ENCODE measurements at regions of chr3 and their contacts with region 1.

Region 1: DNA sequence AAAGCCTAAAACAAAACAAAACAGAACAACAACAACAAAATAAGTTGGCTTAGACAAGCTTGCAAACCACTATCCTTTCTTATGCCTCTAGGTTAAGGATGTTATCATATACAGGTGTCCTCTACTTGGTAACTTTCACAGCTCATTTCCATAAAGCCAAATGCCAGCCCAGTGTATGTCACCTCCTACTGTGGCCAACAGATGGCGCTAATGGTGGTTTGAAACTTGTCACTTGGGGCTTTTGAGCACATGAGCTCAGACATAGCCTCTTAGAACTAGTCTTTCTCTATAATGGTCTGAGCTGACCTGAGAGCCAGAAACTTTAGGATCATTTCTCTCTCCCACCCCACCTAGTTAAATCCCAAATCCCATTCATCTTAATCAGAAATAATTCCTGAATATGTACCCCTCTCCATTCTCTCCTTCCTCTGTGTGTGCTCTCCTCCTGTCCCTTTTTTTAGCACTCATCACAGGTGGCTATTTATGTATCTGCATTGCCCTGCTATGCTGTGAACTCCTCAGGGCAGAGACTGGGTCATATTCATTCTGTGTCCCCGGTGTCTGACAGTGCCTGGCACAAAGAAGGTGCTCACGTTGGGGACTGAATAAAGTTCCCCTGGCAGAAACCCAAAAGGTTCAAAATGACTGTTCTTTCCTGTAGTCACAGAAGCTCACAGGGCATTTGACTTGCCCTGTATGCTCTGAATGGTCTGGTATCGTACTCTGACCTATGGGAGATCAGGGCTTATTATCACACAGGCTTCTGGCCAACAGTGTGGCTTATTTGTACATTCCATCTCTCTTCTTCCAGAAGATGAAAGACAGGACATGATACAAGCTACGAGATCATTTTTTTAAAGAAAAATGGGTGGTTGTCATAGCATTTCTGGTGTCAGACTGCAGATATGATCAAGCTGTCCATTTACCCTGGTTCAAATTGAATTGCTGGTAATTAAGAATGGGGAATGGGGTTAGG is 319.3 kb upstream of the AZI2 start:
- DNase-seq: peak; percentile 11 to 65
- ATAC-seq: peak; percentile 90 to 97
- H3K4me3 ChIP-seq: no peak overlapping the region
- H3K27ac ChIP-seq: no peak overlapping the region
- H3K4me1 ChIP-seq: no peaks in the 10 kb centered on the region
- CTCF ChIP-seq: peak; percentile 70
- EP300 ChIP-seq: no peak
- POLR2A ChIP-seq: no peak
- RAD21 ChIP-seq: peak; percentile 58 to 59

Region 2: DNA sequence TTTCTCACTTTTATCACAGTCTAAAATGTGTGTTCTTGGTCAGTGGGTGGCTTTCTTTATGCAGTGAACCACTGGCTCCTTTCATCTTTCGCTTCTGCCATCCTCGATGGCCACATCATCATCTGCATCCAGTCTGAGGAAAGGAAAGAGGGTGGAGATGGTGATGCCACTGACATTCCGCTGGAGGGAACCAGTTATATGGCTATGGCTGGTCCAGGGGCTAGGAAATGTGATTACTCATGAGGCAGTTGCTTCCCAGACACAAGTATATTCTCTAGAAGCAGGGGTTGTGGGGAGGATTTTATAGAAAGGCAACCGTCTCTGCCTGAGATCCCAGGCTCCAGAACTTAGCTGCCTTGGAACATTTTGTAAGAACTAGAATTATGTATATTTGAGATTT is 72.6 kb before region 1 on chr3:
- CTCF ChIA-PET with region 1: no interaction called
- POLR2A ChIA-PET with region 1: no interaction called
- DNase-seq: no peak
- ATAC-seq: no peak; a peak in 1 of 6 replicates
- H3K4me3 ChIP-seq: no peak overlapping the region
- H3K27ac ChIP-seq: no peak overlapping the region
- H3K4me1 ChIP-seq: no peaks in the 10 kb centered on the region
- CTCF ChIP-seq: no peak
- EP300 ChIP-seq: no peak
- POLR2A ChIP-seq: no peak
- RAD21 ChIP-seq: no peak

Region 3: GRCh38 chr3:28924744-28925360 is 256.9 kb after region 1 on chr3:
- CTCF ChIA-PET with region 1: no interaction called
- POLR2A ChIA-PET with region 1: no interaction called
- DNase-seq: peak in 1 of 2 experiments; percentile 32
- ATAC-seq: no peak
- H3K4me3 ChIP-seq: no peak overlapping the region
- H3K27ac ChIP-seq: no peak overlapping the region
- H3K4me1 ChIP-seq: peaks cover 7% of the 10 kb centered on the region; the same call in 1 of the 3 replicates
- CTCF ChIP-seq: no peak
- EP300 ChIP-seq: no peak
- POLR2A ChIP-seq: no peak
- RAD21 ChIP-seq: no peak

Region 4: DNA sequence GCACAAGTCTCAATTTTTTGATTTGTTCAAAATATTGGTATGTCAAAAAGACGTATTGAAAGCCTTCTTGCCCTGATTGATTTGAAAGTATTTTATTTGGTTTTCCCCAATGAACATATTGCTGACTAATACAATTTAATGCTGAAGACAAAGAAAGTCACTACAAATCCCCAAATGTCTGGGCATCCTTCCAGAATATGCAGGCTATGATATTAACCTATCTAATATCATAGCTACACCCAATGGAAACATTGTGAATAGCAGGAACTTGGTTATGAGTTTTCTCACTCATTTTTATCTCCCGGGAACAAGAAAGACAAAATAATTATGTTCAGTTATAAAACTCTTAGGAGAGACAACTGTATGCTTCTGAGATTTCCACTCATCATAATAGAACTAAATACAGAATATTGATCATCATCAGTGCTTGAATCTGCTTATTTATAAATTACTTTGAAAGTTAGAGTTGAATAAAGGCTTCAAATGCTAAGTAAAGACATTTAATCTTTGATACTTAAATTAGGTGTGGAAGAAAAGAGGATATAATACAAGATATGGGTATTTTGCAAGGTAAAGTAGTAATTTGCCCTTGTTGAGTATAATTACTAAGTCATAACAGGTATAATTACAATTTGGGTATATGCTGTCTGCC is 1096.8 kb after region 1 on chr3:
- CTCF ChIA-PET with region 1: interaction called, 11 read pairs
- POLR2A ChIA-PET with region 1: no interaction called
- DNase-seq: peak; percentile 4 to 70
- ATAC-seq: peak; percentile 62 to 69; a peak in 5 of 6 replicates
- H3K4me3 ChIP-seq: no peak overlapping the region
- H3K27ac ChIP-seq: peak overlapping the region in 1 of 2 experiments; percentile 45; a peak in 2 of 6 replicates
- H3K4me1 ChIP-seq: peaks cover 22% of the 10 kb centered on the region
- CTCF ChIP-seq: peak; percentile 75
- EP300 ChIP-seq: no peak
- POLR2A ChIP-seq: no peak
- RAD21 ChIP-seq: peak; percentile 91 to 94

Measured in A549 (cell line).